IMR-90 (cell line): ENCODE measurements at regions of chr6 and their contacts with region 1.

Region 1: GRCh38 chr6:137313928-137314855 is 95.0 kb upstream of the IFNGR1 start:
- DNase-seq: peak; percentile 64
- ATAC-seq: peak; percentile 90
- H3K4me3 ChIP-seq: no peak overlapping the region
- H3K27ac ChIP-seq: no peak overlapping the region
- H3K4me1 ChIP-seq: no peaks in the 10 kb centered on the region
- H3K27me3 ChIP-seq: peaks cover 6% of the 10 kb centered on the region
- CTCF ChIP-seq: peak; percentile 90
- POLR2A ChIP-seq: no peak
- RAD21 ChIP-seq: peak; percentile 77

Region 2: GRCh38 chr6:136846046-136846445 is 468.1 kb before region 1 on chr6:
- CTCF ChIA-PET with region 1: no interaction called
- POLR2A ChIA-PET with region 1: no interaction called
- dilution Hi-C with region 1: no loop called
- in situ Hi-C with region 1: no loop called
- intact Hi-C with region 1: loop called (anchors 5 kb)
- DNase-seq: peak; percentile 80
- ATAC-seq: peak; percentile 83
- H3K4me3 ChIP-seq: no peak overlapping the region
- H3K27ac ChIP-seq: no peak overlapping the region
- H3K4me1 ChIP-seq: no peaks in the 10 kb centered on the region
- H3K27me3 ChIP-seq: no peaks in the 10 kb centered on the region
- CTCF ChIP-seq: peak; percentile 76
- POLR2A ChIP-seq: no peak
- RAD21 ChIP-seq: peak; percentile 72

Region 3: DNA sequence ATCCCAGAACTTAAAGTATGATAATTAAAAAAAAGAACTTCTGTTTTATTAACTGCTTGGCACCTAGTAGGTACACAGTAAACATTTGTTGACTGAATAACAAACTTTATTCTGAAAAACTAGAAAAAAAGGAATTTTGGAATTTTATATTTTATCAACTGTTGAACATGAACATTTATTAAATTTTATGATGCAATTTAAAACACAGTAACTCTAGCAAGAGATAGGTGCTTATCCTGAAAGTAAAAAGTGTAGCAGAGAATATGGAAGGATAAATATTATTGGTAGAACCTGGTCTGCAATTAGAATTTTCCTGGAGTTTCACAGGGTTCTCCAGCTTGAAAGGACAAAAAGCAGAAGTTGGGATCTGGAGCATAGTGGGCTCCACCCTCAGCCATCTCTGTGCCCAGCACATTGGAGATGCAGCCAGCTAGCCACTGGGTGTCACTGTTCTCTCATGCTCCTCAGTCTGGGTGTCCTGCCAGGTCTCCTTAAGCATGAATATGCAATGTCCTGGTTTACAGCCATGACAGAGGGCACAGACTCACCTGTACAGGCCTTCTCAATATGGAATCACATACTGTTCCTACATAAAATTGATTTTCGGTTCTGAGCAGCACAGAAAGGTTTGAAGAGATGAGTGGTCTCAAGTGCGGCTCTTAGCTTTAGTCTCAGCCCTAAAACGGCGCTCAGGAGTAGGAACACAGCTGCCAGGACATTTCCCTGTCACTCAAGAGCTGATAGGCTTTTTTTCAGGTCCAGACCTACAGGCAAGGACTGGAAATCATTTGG is 237.7 kb before region 1 on chr6:
- CTCF ChIA-PET with region 1: interaction called, 3 read pairs
- POLR2A ChIA-PET with region 1: no interaction called
- dilution Hi-C with region 1: no loop called
- in situ Hi-C with region 1: no loop called
- intact Hi-C with region 1: loop called (anchors 5 kb)
- DNase-seq: peak; percentile 50
- ATAC-seq: peak; percentile 96
- H3K4me3 ChIP-seq: no peak overlapping the region
- H3K27ac ChIP-seq: no peak overlapping the region
- H3K4me1 ChIP-seq: no peaks in the 10 kb centered on the region
- H3K27me3 ChIP-seq: peaks cover 1% of the 10 kb centered on the region; the same call in 1 of the 2 replicates
- CTCF ChIP-seq: peak; percentile 62
- POLR2A ChIP-seq: no peak
- RAD21 ChIP-seq: peak; percentile 64

Region 4: GRCh38 chr6:137094411-137095008 is 219.7 kb before region 1 on chr6:
- CTCF ChIA-PET with region 1: interaction called, 9 read pairs
- POLR2A ChIA-PET with region 1: no interaction called
- dilution Hi-C with region 1: no loop called
- in situ Hi-C with region 1: loop called (anchors 5 kb)
- intact Hi-C with region 1: loop called (anchors 1 kb)
- DNase-seq: peak; percentile 67
- ATAC-seq: peak; percentile 82
- H3K4me3 ChIP-seq: no peak overlapping the region
- H3K27ac ChIP-seq: no peak overlapping the region
- H3K4me1 ChIP-seq: no peaks in the 10 kb centered on the region
- H3K27me3 ChIP-seq: peaks cover 14% of the 10 kb centered on the region
- CTCF ChIP-seq: peak; percentile 78
- POLR2A ChIP-seq: no peak
- RAD21 ChIP-seq: peak; percentile 78

Region 5: DNA sequence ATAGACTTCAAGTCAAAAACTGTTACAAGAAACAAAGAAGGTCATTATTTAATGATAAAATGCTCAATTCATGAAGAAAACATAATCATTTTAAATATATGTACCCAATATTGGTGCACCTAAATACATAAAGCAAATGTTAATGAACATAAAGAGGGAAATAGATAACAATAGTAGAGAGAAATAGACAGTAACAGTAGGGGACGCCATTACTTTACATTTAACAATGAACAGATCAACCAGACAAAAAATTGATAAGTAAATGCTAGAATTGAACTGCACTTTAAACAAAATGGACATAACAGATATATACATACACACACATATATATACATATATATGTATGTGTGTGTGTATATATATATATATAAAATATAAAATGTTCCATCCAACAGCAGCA is 178.1 kb before region 1 on chr6:
- CTCF ChIA-PET with region 1: no interaction called
- POLR2A ChIA-PET with region 1: no interaction called
- dilution Hi-C with region 1: no loop called
- in situ Hi-C with region 1: no loop called
- intact Hi-C with region 1: loop called (anchors 2 kb)
- DNase-seq: no peak
- ATAC-seq: no peak
- H3K4me3 ChIP-seq: no peak overlapping the region
- H3K27ac ChIP-seq: no peak overlapping the region
- H3K4me1 ChIP-seq: no peaks in the 10 kb centered on the region
- H3K27me3 ChIP-seq: no peaks in the 10 kb centered on the region
- CTCF ChIP-seq: peak; percentile 35
- POLR2A ChIP-seq: no peak
- RAD21 ChIP-seq: peak; percentile 44

Region 6: DNA sequence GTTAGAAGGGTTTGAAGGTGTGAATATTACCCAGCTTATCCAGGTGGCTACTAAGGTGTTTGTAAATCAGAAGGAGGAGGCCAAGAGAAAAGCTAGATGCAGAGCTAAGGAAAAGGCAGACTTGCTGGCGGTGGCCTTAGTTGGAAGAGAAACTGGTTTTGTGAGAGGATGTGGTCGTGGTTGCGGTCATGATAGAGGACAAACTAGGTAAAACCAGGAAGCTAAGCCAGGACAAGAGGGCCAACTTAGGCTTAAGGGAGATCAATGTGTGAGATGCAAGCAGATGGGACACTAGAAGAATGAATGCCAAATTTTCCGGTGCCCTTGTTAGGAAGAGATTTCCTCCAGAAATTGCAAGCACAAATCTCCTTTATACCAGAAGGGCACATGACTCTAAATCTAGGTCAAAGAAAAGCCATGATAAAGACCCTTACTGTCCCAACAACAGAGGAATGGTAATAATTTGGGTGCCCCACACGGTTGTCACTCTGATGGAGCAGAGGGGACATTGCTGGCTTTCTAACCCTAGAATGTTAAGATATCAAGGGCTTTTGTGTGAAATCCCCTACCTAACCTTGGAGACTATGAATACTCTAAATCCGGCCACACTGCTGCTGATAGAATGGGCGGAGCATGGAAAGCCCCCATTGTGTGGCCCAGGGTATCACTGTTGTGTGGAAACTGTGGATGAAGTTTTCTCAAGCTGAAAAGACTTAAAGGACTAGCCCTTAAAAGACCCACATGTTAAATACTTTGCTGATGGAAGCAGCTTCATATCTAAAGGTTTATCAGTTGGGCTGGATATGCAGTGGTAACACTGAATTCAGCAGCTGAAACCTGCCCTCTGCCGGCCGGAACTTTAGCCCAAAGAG is 148.6 kb before region 1 on chr6:
- CTCF ChIA-PET with region 1: no interaction called
- POLR2A ChIA-PET with region 1: no interaction called
- dilution Hi-C with region 1: no loop called
- in situ Hi-C with region 1: no loop called
- intact Hi-C with region 1: no loop called
- DNase-seq: no peak
- ATAC-seq: no peak
- H3K4me3 ChIP-seq: no peak overlapping the region
- H3K27ac ChIP-seq: no peak overlapping the region
- H3K4me1 ChIP-seq: no peaks in the 10 kb centered on the region
- H3K27me3 ChIP-seq: peaks cover 5% of the 10 kb centered on the region; the same call in 1 of the 2 replicates
- CTCF ChIP-seq: peak; percentile 22; the same call in 1 of the 2 replicates
- POLR2A ChIP-seq: no peak
- RAD21 ChIP-seq: no peak

Region 7: GRCh38 chr6:137271245-137272183 is 42.7 kb before region 1 on chr6:
- CTCF ChIA-PET with region 1: interaction called, 6 read pairs
- POLR2A ChIA-PET with region 1: no interaction called
- dilution Hi-C with region 1: no loop called
- in situ Hi-C with region 1: no loop called
- intact Hi-C with region 1: loop called (anchors 1 kb)
- DNase-seq: peak; percentile 63
- ATAC-seq: peak; percentile 89
- H3K4me3 ChIP-seq: no peak overlapping the region
- H3K27ac ChIP-seq: no peak overlapping the region
- H3K4me1 ChIP-seq: no peaks in the 10 kb centered on the region
- H3K27me3 ChIP-seq: peaks cover 9% of the 10 kb centered on the region
- CTCF ChIP-seq: peak; percentile 91
- POLR2A ChIP-seq: no peak
- RAD21 ChIP-seq: peak; percentile 90